Ascending aorta (tissue), 2 donors: ENCODE measurements at regions of chr5 and their contacts with region 1.

Region 1: GRCh38 chr5:38666668-38667498 is 110.4 kb upstream of the LIFR start:
- DNase-seq: peak in 1 of 2 donors; percentile 78
- H3K4me3 ChIP-seq: no peak overlapping the region
- H3K27ac ChIP-seq: peak overlapping the region; percentile 65 to 75
- H3K4me1 ChIP-seq: peaks cover 6 to 26% of the 10 kb centered on the region in 2 donors
- H3K27me3 ChIP-seq: no peaks in the 10 kb centered on the region
- CTCF ChIP-seq: peak; percentile 66 to 85 (median 70)

Region 2: GRCh38 chr5:38360323-38361061 is 306.4 kb before region 1 on chr5:
- intact Hi-C with region 1: no loop called
- DNase-seq: no peak
- H3K4me3 ChIP-seq: no peak overlapping the region
- H3K27ac ChIP-seq: no peak overlapping the region
- H3K4me1 ChIP-seq: no peaks in the 10 kb centered on the region
- H3K27me3 ChIP-seq: no peaks in the 10 kb centered on the region
- CTCF ChIP-seq: no peak

Region 3: DNA sequence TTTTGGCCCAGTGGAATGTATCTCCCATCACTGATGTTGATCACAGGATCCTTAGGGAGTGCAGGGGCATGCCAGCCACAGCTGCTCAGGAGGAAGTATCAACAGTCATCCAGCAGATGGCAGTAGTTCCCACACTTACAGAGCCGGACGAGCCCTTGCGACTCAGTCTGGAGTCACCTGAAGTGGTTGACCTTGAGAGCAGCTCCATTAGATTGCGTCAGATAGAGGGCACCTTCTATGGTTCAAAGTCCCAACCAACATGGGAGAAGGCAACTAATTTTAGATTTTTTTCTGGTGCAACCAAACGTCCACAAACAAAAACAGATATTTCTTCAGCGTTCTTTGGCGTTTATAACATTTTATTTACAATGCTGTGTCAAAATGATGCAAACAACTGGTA is 284.0 kb before region 1 on chr5:
- intact Hi-C with region 1: loop called (anchors 2 kb)
- DNase-seq: peak; percentile 14 to 69
- H3K4me3 ChIP-seq: no peak overlapping the region
- H3K27ac ChIP-seq: no peak overlapping the region
- H3K4me1 ChIP-seq: no peaks in the 10 kb centered on the region
- H3K27me3 ChIP-seq: no peaks in the 10 kb centered on the region
- CTCF ChIP-seq: peak; percentile 69 to 88 (median 84)

Region 4: GRCh38 chr5:38497946-38498345 is 168.9 kb before region 1 on chr5:
- intact Hi-C with region 1: loop called (anchors 5 kb)
- DNase-seq: no peak
- H3K4me3 ChIP-seq: no peak overlapping the region
- H3K27ac ChIP-seq: no peak overlapping the region
- H3K4me1 ChIP-seq: no peaks in the 10 kb centered on the region
- H3K27me3 ChIP-seq: no peaks in the 10 kb centered on the region
- CTCF ChIP-seq: peak in 1 of 3 experiments; percentile 33

Region 5: DNA sequence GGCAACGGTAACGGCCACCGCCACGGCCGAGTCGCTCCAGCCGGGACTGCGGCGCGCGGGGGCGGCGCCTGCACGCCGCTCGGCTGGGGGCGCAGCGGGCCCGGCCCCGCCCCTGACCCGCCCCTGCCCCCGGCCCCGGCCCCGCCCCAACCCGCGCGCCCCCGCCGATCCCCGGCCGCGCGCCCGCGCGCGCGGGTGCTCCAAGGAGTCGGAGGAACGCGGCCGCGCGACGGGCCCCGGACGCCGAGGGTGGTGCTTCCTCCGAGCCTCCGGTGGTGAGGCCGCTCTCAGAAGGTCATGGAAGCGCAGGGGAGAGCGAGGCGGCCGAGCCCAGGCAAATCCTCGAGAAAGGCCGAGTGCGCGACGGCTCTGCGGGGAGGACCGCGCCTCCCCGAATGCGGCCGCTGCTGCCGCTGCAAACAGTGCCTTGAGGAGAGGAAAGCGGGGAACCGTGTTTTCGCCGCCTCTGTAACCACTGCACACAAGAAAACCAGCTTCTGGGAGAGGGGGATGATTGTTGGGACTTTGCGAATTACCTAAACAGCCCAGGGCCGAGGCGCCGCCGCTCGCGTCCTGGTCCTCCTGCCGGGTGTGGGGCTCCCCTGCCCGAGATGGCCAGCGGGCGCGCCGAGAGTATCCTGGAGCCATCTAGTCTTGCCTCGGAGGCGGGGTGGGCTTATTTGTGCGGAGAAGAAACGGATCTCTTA is 110.1 kb before region 1 on chr5 and contains the start of gene LIFR:
- intact Hi-C with region 1: loop called (anchors 2 kb)
- DNase-seq: peak in 1 of 2 donors; percentile 86
- H3K4me3 ChIP-seq: peak within 1 kb of the TSS; percentile 78 to 91
- H3K27ac ChIP-seq: peak within 1 kb of the TSS; percentile 91 to 99
- H3K4me1 ChIP-seq: peaks cover 0 to 9% of the 10 kb centered on the region in 2 donors
- H3K27me3 ChIP-seq: no peaks in the 10 kb centered on the region
- CTCF ChIP-seq: no peak
- total RNA-seq, gene LIFR: 116 TPM

Region 6: GRCh38 chr5:38809388-38810359 is 142.8 kb after region 1 on chr5:
- intact Hi-C with region 1: loop called (anchors 5 kb)
- DNase-seq: peak; percentile 23 to 86
- H3K4me3 ChIP-seq: no peak overlapping the region
- H3K27ac ChIP-seq: no peak overlapping the region
- H3K4me1 ChIP-seq: no peaks in the 10 kb centered on the region
- H3K27me3 ChIP-seq: no peaks in the 10 kb centered on the region
- CTCF ChIP-seq: peak; percentile 79 to 87 (median 81)